Dendritic cell treated with granulocyte-macrophage colony-stimulating factor and Interleukin-4, amounts not matched to agents 40 ng/mL and 50 ng/mL, for 4 days (primary cell): ENCODE measurements at regions of chr14 and their contacts with region 1.

Region 1: DNA sequence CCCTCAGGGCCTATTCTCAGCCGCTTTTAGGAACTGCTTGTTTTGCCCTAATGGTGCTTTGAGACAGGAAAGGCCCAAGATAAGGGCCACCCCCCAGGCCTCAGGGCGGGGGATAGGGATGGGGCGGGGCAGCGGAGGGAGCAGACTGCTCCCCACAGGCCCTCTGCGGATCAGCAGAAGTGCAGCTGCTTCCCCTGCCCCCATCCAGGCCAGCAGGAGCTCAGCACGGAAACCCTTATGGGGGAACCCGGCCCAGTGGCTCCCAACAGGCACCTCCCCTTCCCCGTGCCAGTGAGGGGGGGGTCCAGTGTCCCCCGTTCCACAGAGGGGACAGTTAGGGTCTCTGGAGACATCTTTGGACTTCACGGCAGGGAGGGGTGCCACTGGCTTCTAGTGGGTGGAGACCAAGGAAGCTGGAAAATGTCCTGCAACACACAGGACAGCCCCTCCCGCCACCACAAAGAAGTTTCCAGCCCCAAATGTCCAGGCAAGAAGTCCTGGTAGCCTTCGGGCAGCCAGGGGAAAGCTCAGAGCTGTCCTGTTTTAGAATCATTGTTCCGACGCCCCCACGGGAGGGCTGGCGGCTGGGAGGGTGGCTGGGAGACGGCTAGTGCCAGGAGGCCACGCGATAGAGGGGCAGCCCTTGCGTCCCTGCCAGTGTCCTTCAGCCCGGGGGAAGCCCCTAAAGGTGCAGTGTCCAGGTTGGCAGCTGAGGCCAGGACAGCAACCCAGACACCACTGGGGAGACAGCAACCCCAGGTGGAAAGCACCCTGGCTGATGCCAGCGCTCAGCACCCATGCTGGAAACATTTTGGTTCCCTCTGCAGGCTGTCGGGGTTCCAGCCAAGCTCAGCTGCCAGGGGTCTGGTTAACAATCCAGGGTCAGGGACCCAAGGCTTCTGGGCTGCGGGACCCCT is 10.4 kb upstream of the GPR132 start:
- H3K4me3 Mint-ChIP-seq: peak overlapping the region; percentile 68
- H3K27ac Mint-ChIP-seq: peak overlapping the region; percentile 94
- H3K4me1 Mint-ChIP-seq: peaks cover 61% of the 10 kb centered on the region
- H3K27me3 Mint-ChIP-seq: peaks cover 7% of the 10 kb centered on the region

Region 2: DNA sequence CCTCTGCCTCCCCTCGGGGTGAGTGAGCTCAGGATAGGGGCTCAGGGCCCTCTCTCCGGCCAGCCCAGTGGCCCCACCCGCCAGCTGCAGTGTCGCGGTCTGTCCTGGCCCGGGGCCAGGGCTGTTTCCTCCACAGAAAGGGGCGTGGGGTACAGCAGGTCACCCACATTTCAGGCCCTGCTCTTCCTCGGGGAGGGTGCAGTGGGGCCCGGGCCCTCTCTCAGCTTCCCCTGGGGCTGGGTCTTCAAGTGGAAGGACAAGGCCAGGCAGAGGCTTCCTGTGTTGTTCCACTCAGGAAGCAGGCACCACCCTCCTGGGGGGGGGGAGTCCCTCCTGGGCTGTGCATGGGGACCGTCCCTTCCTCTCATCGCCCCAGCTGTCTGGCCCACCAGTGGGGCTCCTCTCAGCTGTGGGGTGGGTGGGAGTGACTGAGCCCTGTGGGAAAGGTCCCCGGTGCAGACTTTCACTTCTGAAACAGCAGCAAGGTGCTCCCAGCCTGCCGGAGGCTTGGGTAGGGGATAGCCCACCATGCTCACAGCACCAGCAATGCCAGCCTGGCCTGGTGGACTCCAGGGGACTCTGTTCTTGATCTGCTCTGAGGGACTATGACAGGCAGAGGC is 14.1 kb before region 1 on chr14:
- intact Hi-C with region 1: loop called (anchors 2 kb)
- H3K4me3 Mint-ChIP-seq: peak overlapping the region; percentile 76
- H3K27ac Mint-ChIP-seq: peak overlapping the region; percentile 98
- H3K4me1 Mint-ChIP-seq: peaks cover 80% of the 10 kb centered on the region
- H3K27me3 Mint-ChIP-seq: no peaks in the 10 kb centered on the region